ENCODE measurements at regions of chr5 and their contacts with region 1.

Region 1: DNA sequence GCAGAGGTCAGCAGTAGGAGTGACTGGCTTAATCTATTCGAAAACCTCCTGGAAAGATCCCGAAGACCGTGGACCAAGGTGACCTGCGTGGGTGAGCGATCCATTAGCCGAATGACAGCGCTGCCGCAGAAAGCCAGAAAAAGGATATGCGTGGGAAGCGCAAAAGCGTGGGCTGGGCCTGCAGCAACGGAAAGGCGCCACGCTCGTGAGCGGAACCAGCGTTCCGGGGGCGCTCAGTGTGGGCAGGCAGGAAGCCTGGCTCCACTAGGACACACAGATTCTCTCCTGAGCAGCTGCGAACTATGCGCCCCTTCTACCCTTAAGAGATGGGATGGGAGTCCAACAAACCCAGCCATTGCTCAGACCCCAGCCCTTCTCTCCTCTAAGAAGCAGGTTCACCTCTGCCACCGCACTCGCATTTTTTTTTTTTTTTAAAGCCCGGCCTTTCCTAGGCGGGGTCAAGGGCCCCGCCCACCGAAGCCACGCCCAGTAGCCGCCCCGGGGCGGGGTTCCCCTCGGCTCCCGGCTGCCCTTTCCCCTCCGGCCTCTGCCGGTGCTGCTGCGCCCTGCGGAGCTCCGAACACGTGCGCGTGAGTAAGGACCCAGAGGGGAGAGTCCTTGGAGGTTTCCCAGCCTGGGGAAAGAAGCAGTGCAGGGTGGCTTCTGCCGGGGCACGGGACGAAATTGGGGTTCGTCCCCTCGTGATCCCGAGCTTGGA is 19.8 kb upstream of the MATR3 start:
- DNase-seq: peak; percentile 85
- H3K4me3 Mint-ChIP-seq: peak overlapping the region; percentile 96
- H3K27ac Mint-ChIP-seq: peak overlapping the region; percentile 82
- H3K4me1 Mint-ChIP-seq: peaks cover 50% of the 10 kb centered on the region
- H3K27me3 Mint-ChIP-seq: peaks cover 9% of the 10 kb centered on the region

Region 2: DNA sequence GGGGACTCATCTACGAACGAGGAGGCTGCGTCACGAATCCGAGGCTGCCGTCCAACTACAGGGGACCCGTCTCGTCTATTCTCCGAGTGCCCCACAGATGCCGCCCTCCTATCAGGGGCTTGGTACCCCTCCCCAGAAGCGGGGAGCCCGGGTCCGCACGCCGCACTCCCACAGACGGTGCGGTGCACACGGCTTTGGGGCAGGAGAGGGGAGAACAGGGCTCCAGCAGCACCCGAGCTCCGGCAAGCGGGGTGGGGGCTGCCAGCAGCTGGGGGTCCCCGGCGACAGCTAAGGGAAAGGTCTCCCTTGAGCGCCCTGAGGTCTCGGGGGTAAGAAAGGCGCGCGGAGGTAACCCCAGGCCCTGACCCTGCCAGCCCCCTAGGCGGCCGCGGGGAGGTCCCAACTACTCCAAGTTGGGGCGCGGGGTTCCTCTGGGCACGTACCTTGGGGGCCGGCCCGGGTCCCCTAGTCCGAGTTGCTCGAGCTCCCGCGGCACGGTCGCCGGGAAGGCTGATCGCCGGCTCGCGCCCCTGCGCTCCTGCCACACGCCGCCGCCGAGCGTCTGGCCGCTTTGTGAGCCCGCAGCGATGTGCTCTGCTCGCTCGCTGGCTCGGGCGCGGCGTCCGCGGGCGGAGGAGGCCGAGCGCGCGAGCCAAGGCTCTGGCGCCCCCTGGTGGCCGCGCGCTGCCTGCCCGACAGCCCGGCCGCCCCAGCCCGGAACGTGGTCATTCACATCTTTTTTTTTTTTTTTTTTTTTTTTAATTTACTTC is 1774.8 kb before region 1 on chr5 and contains the start of gene SPOCK1:
- intact Hi-C with region 1: no loop called
- DNase-seq: peak; percentile 36
- H3K4me3 Mint-ChIP-seq: no peak within 1 kb of the TSS
- H3K27ac Mint-ChIP-seq: no peak within 1 kb of the TSS
- H3K4me1 Mint-ChIP-seq: no peaks in the 10 kb centered on the region
- H3K27me3 Mint-ChIP-seq: peaks cover 34% of the 10 kb centered on the region
- total RNA-seq, gene SPOCK1: not detected in 2 replicates

Region 3: DNA sequence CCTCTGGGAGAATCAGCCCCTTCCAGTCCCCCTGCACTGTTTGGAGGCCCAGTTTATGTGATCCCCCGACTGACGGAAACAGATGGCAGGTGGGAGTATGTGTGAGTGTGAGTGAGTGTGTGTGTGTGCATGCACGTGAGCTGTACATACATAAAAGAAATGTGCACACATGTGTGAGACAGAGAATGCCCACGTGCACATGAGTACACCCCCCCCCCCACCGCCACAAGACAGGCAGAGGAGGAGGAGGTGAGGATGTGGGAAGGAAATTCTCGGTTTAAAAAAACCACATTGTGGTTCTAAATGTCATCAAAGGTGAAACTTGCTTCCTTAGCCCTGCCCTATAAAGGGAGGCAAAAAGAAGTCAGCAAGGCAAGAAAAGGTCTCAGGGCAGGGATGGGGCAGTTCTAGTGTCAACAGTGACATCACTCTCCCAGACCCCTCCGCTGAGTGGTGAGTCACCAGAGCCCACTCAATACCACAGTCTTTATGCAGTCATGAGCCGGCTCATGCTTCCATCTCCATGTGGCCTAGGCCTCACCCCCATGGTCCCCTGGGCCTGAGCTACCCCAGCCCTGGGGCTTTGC is 619.4 kb before region 1 on chr5:
- intact Hi-C with region 1: loop called (anchors 5 kb)
- DNase-seq: peak; percentile 50
- H3K4me3 Mint-ChIP-seq: peak overlapping the region; percentile 54
- H3K27ac Mint-ChIP-seq: peak overlapping the region; percentile 81
- H3K4me1 Mint-ChIP-seq: peaks cover 19% of the 10 kb centered on the region
- H3K27me3 Mint-ChIP-seq: peaks cover 77% of the 10 kb centered on the region

Region 4: DNA sequence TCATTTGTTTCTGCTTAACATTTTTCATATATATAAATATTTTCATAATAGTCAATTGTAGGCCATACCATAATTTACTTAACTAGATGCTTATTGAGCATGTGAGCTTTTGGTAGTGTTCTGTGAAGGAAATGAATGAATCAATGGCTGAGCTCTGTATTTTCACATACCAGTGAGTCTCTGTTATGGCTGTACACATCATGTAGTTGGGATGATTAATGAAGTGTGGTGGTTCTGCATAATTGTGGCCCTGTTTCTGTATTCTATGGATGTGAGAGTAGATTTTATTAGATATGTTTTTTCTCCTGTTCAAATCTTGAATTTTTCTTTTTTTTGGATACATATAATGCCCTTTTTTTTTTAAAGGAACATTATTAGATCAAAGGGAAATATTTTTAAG is 464.3 kb before region 1 on chr5:
- intact Hi-C with region 1: no loop called
- DNase-seq: no peak
- H3K4me3 Mint-ChIP-seq: no peak overlapping the region
- H3K27ac Mint-ChIP-seq: no peak overlapping the region
- H3K4me1 Mint-ChIP-seq: peaks cover 6% of the 10 kb centered on the region
- H3K27me3 Mint-ChIP-seq: no peaks in the 10 kb centered on the region

Region 5: DNA sequence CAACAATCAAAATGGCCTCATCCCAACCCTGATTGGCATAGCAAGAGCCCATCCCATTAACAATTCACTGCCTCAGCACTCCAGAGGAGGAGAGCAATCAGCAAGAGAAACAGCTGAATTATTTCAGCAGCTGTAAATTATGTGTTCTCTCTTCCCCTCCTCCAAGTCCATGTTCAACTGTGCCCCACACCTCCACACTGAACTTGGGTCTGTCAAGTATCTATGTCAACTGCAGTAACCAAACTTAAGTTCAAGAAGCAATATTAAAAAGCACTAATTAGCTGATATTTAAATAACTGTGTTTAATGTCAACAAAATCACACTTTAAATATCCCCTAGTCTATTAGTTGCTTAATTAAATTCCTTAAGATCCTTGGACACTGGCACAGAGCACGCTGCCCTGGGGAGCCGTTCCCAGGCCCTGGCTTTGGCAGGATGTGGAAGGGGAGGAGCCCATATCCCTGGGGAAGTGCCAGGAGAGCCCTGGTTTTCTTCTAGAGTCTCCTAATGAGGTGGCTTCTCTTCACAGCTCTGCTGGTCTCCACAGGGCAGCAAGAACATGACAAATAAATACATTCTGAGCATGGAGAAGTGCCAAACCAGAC is 126.1 kb before region 1 on chr5:
- intact Hi-C with region 1: loop called (anchors 1 kb)
- DNase-seq: no peak
- H3K4me3 Mint-ChIP-seq: no peak overlapping the region
- H3K27ac Mint-ChIP-seq: no peak overlapping the region
- H3K4me1 Mint-ChIP-seq: peaks cover 23% of the 10 kb centered on the region
- H3K27me3 Mint-ChIP-seq: no peaks in the 10 kb centered on the region

Region 6: GRCh38 chr5:139246394-139246793 is 27.3 kb before region 1 on chr5:
- intact Hi-C with region 1: loop called (anchors 1 kb)
- DNase-seq: peak; percentile 8
- H3K4me3 Mint-ChIP-seq: peak overlapping the region; percentile 62
- H3K27ac Mint-ChIP-seq: peak overlapping the region; percentile 83
- H3K4me1 Mint-ChIP-seq: peaks cover 32% of the 10 kb centered on the region
- H3K27me3 Mint-ChIP-seq: peaks cover 3% of the 10 kb centered on the region

Region 7: DNA sequence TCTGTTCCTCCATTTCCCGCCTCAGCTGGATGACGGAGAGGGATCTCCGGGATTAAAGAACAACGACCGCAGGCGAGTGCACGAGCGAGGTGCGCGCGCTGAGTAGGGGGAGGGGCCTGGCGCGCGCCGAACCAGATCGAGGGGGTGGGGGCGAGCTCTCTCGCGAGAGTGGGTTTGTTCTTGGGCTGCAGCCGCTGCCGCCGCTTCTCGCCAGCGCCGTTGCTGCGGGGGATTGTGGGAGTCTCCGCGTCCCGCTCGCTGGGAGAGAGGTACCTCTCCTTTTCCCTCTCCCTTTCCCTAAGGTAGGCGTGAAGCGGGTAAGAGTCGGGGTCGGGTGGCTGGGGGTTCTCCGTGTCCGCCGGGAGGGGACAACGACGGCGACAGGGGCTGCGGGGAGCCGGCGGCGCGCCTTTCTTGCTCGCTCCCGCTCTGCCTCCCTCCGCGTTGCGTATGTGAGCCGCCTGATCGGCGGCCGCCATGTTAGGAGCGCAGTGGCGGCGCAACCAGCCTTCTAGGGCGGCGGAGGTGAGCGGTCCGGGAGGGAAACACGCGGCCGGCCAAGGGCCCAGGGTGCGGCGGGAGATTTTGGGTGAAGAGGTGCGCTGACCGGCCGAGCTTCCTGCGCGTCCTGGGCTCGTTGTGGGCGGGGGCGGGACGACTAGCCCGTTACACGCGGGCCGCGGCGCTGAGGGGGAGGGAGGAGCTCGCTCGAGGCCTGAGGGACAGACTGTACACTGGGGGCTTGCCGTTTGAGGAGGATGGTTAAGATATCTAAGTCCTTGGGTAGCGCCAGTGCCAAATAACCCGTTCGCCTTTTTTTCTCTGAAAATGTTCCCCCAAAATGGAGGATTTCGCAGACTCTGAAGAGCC is 20.0 kb after region 1 on chr5 and contains the start of gene MATR3:
- intact Hi-C with region 1: loop called (anchors 1 kb)
- DNase-seq: peak; percentile 88
- H3K4me3 Mint-ChIP-seq: peak within 1 kb of the TSS; percentile 95
- H3K27ac Mint-ChIP-seq: peak within 1 kb of the TSS; percentile 94
- H3K4me1 Mint-ChIP-seq: peaks cover 37% of the 10 kb centered on the region
- H3K27me3 Mint-ChIP-seq: no peaks in the 10 kb centered on the region
- total RNA-seq, gene MATR3: 232 and 258 TPM in 2 replicates

Region 8: DNA sequence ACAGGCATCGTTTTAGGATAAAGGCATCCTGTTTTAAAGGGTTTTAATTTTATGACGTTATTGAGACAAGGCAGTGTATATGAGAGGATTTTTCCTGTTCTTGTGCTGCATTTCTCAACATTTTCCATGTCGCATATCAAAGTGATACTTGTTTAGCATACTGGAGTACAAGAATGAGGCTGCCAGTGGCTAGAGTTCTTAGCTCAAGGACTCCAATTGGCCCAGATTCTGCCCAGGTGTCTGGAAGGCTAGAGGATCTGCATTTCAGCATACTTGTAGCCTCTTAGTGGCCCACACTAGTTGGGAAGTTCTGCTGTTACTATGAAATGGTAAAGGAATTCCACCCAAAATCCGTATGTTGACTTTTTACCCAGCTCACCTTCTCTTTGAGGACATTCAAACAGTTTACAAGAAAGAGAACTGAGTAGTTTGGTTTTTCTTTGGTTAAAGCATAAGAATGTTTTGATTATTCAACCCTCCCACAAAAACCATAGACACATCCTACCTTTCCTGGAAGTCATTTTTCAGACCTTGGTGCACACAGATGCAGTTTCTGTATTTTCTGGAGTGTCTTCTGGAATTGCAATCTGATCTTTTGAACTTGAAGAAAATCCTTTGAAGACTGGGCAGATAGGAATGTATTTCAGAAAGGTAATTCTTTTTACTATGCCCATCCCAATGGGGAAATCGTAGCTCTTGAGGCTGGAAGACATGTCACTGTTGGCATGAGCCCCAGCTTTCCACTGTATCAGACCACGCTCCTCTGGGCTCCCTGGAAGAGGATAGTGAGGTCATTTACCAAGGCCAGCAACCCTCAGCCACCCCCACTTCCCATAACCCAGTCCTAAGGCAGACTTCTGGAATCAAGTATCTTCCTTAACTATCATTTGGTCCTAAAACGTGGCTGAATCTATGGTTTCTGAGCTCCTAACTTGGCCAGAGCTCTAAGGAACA is 98.0 kb after region 1 on chr5:
- intact Hi-C with region 1: no loop called
- DNase-seq: no peak
- H3K4me3 Mint-ChIP-seq: peak overlapping the region; percentile 16
- H3K27ac Mint-ChIP-seq: peak overlapping the region; percentile 53
- H3K4me1 Mint-ChIP-seq: peaks cover 16% of the 10 kb centered on the region
- H3K27me3 Mint-ChIP-seq: no peaks in the 10 kb centered on the region

Region 9: GRCh38 chr5:139392678-139393496 is 119.2 kb after region 1 on chr5:
- intact Hi-C with region 1: loop called (anchors 2 kb)
- DNase-seq: peak; percentile 84
- H3K4me3 Mint-ChIP-seq: peak overlapping the region; percentile 96
- H3K27ac Mint-ChIP-seq: peak overlapping the region; percentile 95
- H3K4me1 Mint-ChIP-seq: peaks cover 58% of the 10 kb centered on the region
- H3K27me3 Mint-ChIP-seq: no peaks in the 10 kb centered on the region

Region 10: GRCh38 chr5:139574641-139575312 is 301.0 kb after region 1 on chr5:
- intact Hi-C with region 1: no loop called
- DNase-seq: no peak
- H3K4me3 Mint-ChIP-seq: no peak overlapping the region
- H3K27ac Mint-ChIP-seq: no peak overlapping the region
- H3K4me1 Mint-ChIP-seq: peaks cover 64% of the 10 kb centered on the region
- H3K27me3 Mint-ChIP-seq: no peaks in the 10 kb centered on the region

Measured in activated T-helper 1 cell treated with anti-CD3 and anti-CD28 coated beads, Interleukin-12 subunit alpha, Interleukin-12 subunit beta, Interleukin-2, Interleukin-4 antibody, amounts not matched to agents 30 ng/mL and 10 ng/mL and 1 ng/mL, durations not matched to agents 14 hours and 24 hours and 36 hours (primary cell).